Tibial artery (tissue), 4 donors: ENCODE measurements at regions of chr1 and their contacts with region 1.

Region 1: GRCh38 chr1:37147392-37147831 is 113.1 kb upstream of the GRIK3 start:
- DNase-seq: no peak
- H3K4me3 ChIP-seq: no peak overlapping the region
- H3K27ac ChIP-seq: no peak overlapping the region
- H3K4me1 ChIP-seq: no peaks in the 10 kb centered on the region
- H3K27me3 ChIP-seq: peaks cover 0 to 5% of the 10 kb centered on the region in 2 donors
- CTCF ChIP-seq: no peak

Region 2: GRCh38 chr1:37108596-37109188 is 38.7 kb before region 1 on chr1:
- intact Hi-C with region 1: no loop called
- DNase-seq: no peak
- H3K4me3 ChIP-seq: no peak overlapping the region
- H3K27ac ChIP-seq: no peak overlapping the region
- H3K4me1 ChIP-seq: no peaks in the 10 kb centered on the region
- H3K27me3 ChIP-seq: peaks cover 0 to 8% of the 10 kb centered on the region in 2 donors
- CTCF ChIP-seq: no peak

Region 3: DNA sequence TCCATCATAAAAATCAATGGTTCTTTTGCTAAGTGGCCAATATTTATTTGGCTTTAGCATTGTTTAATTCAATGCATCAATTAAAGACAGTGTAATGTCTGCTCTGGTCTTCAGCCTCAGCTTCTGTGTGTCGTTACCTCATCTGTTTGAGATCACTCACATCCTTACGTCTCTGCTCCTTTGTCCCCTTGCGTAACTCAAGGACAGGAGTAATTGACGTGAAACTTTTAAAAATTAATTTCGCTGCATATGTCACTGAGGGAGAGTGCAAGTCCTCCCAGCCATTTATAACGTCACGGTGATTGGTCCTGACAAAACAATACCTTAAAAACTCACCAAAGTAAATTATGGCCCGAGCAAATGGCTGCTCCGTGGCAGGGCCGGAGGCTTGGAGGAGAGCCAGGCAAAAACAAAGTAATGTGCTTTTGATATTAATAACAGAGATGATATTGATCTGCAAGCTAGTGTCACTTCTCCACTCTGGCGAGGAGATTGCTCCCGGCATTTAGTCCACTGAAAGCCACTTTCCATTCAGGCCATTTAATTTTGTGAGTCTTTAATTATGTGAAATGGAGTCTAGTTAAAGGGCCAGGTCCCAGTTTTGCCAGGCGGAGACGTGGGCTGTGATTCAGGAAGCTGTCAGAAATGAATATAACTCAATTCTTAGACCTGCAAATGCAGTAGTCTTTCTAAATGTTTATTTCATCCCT is 1050.1 kb after region 1 on chr1:
- intact Hi-C with region 1: loop called (anchors 5 kb)
- DNase-seq: no peak
- H3K4me3 ChIP-seq: no peak overlapping the region
- H3K27ac ChIP-seq: no peak overlapping the region
- H3K4me1 ChIP-seq: no peaks in the 10 kb centered on the region
- H3K27me3 ChIP-seq: peaks cover 0 to 9% of the 10 kb centered on the region in 2 donors
- CTCF ChIP-seq: no peak